ENCODE measurements at regions of chr1 and their contacts with region 1.

Region 1: DNA sequence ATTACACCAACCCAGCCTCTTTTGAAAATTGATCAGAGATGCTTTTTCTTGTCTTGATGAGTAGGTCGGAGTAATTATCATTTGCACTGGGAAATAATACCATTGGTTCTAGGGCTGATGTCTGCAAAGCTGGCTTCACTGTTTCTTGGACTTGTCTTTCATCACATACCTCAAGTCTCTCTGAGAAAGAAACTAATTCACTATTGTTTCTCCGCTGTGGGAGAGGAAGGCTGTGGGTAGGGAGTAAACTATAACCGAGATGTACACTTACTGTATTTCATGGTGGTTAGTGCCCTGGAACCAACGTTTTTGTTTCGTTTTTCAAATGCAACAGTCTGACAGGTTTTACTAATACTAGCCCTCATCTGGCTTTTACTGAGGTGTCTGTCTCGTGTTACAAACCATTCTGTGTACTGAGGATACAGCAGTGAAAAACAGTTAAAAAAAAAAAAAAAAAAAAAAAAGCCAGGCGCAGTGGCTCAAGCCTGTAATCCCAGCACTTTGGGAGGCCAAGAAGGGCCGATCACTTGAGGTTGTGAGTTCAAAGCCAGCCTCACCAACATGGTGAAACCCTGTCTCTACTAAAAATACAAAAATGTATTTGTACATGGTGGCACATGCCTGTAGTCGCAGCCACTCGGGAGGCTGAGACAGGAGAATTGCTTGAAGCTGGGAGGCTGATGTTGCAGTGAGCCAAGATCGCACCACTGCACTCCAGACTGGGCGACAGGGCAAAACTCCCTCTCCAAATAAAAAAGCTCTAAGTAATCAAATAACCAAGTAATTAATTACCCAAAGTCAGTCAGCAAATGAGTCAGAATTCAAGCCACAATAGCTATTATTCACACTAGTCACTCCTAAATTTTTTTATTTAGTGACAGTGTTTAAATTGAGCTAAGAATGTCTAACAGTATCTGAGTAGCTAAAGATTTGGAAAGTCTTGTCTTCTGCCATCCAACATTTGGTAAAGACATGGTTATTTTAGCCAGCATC is 23.3 kb downstream of the TOMM20 start:
- DNase-seq: no peak
- H3K4me3 ChIP-seq: no peak overlapping the region
- H3K27ac ChIP-seq: no peak overlapping the region
- H3K4me1 ChIP-seq: peaks cover 11 to 21% (median 15%) of the 10 kb centered on the region in 4 donors
- H3K27me3 ChIP-seq: no peaks in the 10 kb centered on the region
- CTCF ChIP-seq: no peak
- EP300 ChIP-seq: no peak
- POLR2A ChIP-seq: no peak

Region 2: GRCh38 chr1:234955107-234955731 is 150.1 kb before region 1 on chr1:
- intact Hi-C with region 1: no loop called
- DNase-seq: no peak
- H3K4me3 ChIP-seq: no peak overlapping the region
- H3K27ac ChIP-seq: peak overlapping the region; percentile 48 to 89 (median 80)
- H3K4me1 ChIP-seq: peaks cover 19 to 46% (median 38%) of the 10 kb centered on the region in 4 donors
- H3K27me3 ChIP-seq: no peaks in the 10 kb centered on the region
- CTCF ChIP-seq: no peak
- EP300 ChIP-seq: no peak
- POLR2A ChIP-seq: no peak

Region 3: DNA sequence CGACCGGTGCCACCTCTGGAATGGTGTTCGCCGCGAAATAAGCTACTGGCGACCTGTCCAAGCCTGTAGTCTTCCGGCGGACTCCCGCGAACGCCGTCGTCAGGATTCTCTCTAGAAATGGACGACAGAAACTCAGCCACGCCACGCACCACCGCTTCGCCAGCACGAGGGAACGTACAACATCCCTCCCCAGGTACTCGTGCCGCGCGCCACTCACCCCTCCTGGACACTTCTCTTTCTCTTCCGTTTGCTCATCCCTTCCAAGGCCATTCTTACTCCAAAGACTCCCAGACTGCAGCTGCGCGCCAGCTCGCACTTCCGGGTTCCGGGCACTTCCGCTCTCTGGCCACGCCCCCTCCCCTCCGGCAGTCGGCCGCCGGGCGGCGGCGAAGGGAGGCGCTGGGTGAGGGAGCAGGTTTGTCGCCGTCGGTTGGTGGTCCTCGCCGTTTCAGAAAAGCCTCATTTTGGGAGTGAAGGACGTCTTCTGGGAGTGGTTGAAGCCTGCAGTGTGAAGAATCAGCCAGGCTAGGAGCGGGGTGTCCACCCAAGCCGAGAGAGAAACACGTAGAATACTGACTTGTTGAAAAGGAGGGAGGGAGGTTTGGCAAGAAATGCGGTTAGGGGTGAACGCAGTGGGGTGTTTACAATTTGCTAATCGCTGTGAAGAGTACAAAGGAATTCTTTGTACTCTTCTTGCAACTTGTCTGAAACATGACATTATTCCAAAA is 55.8 kb after region 1 on chr1 and contains the start of gene RBM34:
- intact Hi-C with region 1: loop called (anchors 10 kb)
- DNase-seq: peak; percentile 97
- H3K4me3 ChIP-seq: peak within 1 kb of the TSS; percentile 74 to 84 (median 80)
- H3K27ac ChIP-seq: peak within 1 kb of the TSS; percentile 86 to 94 (median 90)
- H3K4me1 ChIP-seq: peaks cover 17 to 46% (median 36%) of the 10 kb centered on the region in 4 donors
- H3K27me3 ChIP-seq: no peaks in the 10 kb centered on the region
- CTCF ChIP-seq: peak; percentile 22 to 41 (median 31)
- EP300 ChIP-seq: no peak
- POLR2A ChIP-seq: peak; percentile 92
- total RNA-seq, gene RBM34: 41.9 to 57.2 (median 53.4) TPM

Region 4: GRCh38 chr1:235229868-235230267 is 124.5 kb after region 1 on chr1:
- intact Hi-C with region 1: no loop called
- DNase-seq: no peak
- H3K4me3 ChIP-seq: no peak overlapping the region
- H3K27ac ChIP-seq: no peak overlapping the region
- H3K4me1 ChIP-seq: no peaks in the 10 kb centered on the region
- H3K27me3 ChIP-seq: no peaks in the 10 kb centered on the region
- CTCF ChIP-seq: no peak
- EP300 ChIP-seq: no peak
- POLR2A ChIP-seq: no peak

Region 5: DNA sequence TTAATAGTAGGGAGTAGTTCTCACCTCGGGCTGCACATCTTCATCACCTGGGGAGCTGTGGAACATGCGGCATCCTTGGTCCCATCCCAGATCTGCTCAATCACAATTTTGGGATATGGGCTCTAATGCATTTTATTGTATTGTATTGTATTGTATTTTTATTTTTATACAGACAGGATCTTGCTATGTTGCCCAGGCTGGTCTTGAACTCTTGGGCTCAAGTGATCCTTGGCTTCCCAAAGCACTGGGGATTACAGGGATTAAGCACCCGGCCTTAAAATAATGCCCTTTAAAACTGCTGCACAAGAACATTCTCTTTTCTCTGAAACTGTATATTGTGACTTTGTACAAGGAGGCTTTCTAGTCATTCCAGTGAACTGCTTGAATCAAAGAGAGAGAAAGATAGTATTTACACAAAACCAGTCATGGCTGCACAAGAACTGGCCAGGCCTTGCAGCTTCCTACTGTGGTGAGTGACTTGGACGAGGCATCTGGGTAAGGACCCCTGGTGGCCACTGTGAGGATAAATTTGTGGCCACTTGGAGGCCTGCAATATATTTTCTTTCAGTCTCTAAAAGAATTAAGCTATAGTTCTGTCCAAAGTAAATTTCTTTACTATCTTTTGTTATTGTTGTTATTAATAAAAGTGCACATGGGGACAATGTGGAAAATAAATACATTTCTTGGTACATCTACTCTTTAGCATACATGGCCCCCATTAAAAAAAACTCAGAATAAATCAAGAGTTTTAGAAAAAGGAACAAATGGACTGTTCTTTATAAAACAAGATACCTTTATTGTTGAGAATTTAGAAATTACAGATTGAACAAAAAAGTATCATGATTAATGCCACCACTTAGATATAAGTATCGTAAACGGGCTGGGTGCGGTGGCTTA is 309.9 kb after region 1 on chr1:
- intact Hi-C with region 1: loop called (anchors 5 kb)
- DNase-seq: no peak
- H3K4me3 ChIP-seq: no peak overlapping the region
- H3K27ac ChIP-seq: no peak overlapping the region
- H3K4me1 ChIP-seq: peaks cover 3 to 10% (median 6%) of the 10 kb centered on the region in 4 donors
- H3K27me3 ChIP-seq: no peaks in the 10 kb centered on the region
- CTCF ChIP-seq: peak; percentile 60 to 71 (median 64)
- EP300 ChIP-seq: no peak
- POLR2A ChIP-seq: no peak

Measured in esophagus muscularis mucosa (tissue), 4 donors.